ENCODE measurements at regions of chr1 and their contacts with region 1.

Region 1: GRCh38 chr1:64864018-64864940 is 102.1 kb downstream of the JAK1 start:
- DNase-seq: no peak
- ATAC-seq: no peak; the same call in 2 of the 3 replicates
- H3K4me3 ChIP-seq: no peak overlapping the region
- H3K27ac ChIP-seq: no peak overlapping the region
- H3K4me1 ChIP-seq: 0 out of 2 replicates have a peak, but pooled peaks cover 4% of the 10 kb centered on the region
- H3K27me3 ChIP-seq: no peaks in the 10 kb centered on the region
- CTCF ChIP-seq: no peak
- EP300 ChIP-seq: no peak
- POLR2A ChIP-seq: no peak
- RAD21 ChIP-seq: no peak

Region 2: GRCh38 chr1:64775113-64775512 is 89.2 kb before region 1 on chr1:
- CTCF ChIA-PET with region 1: no interaction called
- POLR2A ChIA-PET with region 1: no interaction called
- in situ Hi-C with region 1: no loop called
- intact Hi-C with region 1: no loop called
- DNase-seq: no peak
- ATAC-seq: no peak
- H3K4me3 ChIP-seq: no peak overlapping the region
- H3K27ac ChIP-seq: no peak overlapping the region
- H3K4me1 ChIP-seq: no peaks in the 10 kb centered on the region
- H3K27me3 ChIP-seq: no peaks in the 10 kb centered on the region
- CTCF ChIP-seq: no peak
- EP300 ChIP-seq: no peak
- POLR2A ChIP-seq: no peak
- RAD21 ChIP-seq: no peak

Region 3: DNA sequence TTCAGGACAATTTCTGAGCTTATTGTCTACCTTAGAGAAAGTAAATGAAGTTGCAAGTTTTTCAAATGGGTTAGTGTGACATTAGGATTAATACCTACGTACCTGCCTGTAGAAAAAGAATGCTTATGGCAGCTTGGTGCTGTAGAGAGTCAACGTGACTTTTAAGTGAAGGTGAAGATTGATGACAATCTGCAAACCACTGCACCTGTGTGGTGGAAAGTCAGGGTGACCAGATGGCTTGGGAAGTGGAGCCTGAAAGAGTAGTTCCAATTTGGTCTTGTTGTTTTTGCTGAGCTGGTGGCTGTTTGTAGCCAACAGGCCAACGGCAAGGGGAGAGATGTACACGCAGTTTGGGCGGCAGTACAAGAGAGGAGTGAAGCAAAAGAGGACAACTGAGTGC is 180.1 kb after region 1 on chr1:
- CTCF ChIA-PET with region 1: no interaction called
- POLR2A ChIA-PET with region 1: no interaction called
- in situ Hi-C with region 1: no loop called
- intact Hi-C with region 1: loop called (anchors 5 kb)
- DNase-seq: no peak
- ATAC-seq: no peak
- H3K4me3 ChIP-seq: no peak overlapping the region
- H3K27ac ChIP-seq: no peak overlapping the region
- H3K4me1 ChIP-seq: peaks cover 9% of the 10 kb centered on the region; the same call in 1 of the 2 replicates
- H3K27me3 ChIP-seq: no peaks in the 10 kb centered on the region; a peak in 1 of 5 replicates
- CTCF ChIP-seq: no peak
- EP300 ChIP-seq: no peak
- POLR2A ChIP-seq: no peak
- RAD21 ChIP-seq: no peak

Measured in HepG2 (cell line).